ENCODE measurements at regions of chr1 and their contacts with region 1.

Region 1: GRCh38 chr1:200154069-200154767 is 126.7 kb downstream of the NR5A2 start:
- DNase-seq: peak; percentile 94
- H3K4me3 ChIP-seq: no peak overlapping the region
- H3K27ac ChIP-seq: no peak overlapping the region
- H3K4me1 ChIP-seq: peaks cover 12% of the 10 kb centered on the region
- H3K27me3 ChIP-seq: no peaks in the 10 kb centered on the region
- CTCF ChIP-seq: no peak
- POLR2A ChIP-seq: no peak

Region 2: DNA sequence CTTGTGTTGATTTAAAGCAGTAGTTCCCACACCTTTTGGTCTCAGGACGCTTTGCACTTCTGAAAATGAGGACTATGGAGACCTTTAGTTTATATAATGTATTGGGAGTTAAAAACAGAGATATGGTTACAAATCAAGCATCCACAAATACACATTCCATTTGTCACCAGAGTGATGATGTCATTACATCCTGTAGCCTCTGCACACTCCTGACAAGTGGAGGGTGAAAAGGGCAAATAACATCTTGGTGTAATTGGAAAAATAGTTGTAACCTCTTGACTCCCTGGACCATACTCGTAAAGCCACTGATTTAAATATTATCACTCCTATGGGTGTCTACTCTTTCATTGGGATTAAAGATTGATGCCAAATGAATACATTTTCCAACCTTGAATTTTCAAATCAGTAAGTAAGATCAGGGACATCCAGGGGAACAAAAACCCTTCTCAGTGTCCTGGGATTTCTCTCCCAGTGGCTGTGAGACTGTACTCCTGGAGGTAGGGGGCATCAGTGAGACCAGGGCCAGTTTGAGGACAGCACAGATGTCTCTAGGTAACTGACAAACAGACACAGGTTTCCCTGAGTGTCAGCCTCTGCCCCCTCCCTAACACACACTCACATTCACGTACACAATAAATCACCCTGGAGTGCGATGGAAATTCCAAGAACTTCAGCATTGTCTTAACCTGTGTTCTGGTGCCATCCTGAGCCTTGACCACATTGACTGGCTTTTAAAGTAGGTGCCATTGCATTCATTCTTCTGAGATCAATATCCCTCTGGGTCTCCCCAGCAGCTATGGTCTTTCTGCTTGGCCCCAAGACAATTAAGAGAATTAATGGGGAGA is 63.7 kb before region 1 on chr1:
- CTCF ChIA-PET with region 1: no interaction called
- POLR2A ChIA-PET with region 1: no interaction called
- dilution Hi-C with region 1: no loop called
- intact Hi-C with region 1: no loop called
- DNase-seq: peak; percentile 83
- H3K4me3 ChIP-seq: no peak overlapping the region
- H3K27ac ChIP-seq: no peak overlapping the region
- H3K4me1 ChIP-seq: peaks cover 10% of the 10 kb centered on the region
- H3K27me3 ChIP-seq: no peaks in the 10 kb centered on the region
- CTCF ChIP-seq: peak in 1 of 2 donors; percentile 29
- POLR2A ChIP-seq: no peak

Region 3: GRCh38 chr1:200128944-200129885 is 25.0 kb before region 1 on chr1:
- CTCF ChIA-PET with region 1: no interaction called
- POLR2A ChIA-PET with region 1: no interaction called
- dilution Hi-C with region 1: no loop called
- intact Hi-C with region 1: no loop called
- DNase-seq: no peak
- H3K4me3 ChIP-seq: no peak overlapping the region
- H3K27ac ChIP-seq: no peak overlapping the region
- H3K4me1 ChIP-seq: no peaks in the 10 kb centered on the region
- H3K27me3 ChIP-seq: no peaks in the 10 kb centered on the region
- CTCF ChIP-seq: no peak
- POLR2A ChIP-seq: no peak

Region 4: DNA sequence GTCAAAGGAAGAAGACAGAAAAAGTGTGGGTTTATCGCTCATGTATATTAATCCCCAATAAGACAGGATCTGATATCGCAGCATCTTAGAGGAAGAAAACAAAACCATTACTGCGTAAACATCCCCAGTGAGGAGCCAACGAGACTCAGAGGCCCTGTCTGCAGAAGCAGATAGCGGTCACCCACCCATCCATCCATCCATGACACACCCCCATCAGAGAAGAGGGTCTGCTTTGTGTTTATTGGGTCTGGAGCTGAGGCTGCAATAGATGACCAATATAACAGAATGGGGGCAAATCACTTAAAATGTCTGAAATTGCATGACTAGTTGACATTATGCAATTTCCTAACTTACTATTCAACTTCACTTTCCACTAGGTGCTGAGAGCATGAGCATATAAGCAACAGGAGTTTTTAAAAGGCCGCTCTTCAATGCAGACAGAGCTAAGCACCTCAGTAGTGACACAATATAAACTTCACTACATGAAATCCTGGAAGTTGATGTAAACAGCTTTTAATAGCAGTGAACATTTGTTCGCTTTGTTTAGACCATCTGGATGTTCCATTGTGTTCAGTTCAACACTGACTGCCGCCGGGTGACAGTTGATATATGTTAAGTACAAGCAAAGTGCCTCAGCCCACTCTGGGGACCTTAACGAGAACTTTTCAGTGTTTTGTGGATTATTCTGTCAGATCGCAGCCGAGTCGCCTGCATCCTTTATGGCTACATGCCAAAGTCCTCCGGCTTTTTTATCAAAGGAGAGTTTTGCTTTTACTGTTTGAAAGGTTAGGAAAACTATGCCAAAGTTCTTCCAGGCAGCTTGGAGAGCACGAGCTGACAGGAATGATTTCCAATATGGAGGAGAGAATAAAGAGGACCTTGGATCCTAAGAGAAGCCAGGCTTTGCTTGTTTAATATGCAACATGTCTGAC is 88.2 kb after region 1 on chr1:
- CTCF ChIA-PET with region 1: no interaction called
- POLR2A ChIA-PET with region 1: no interaction called
- dilution Hi-C with region 1: no loop called
- intact Hi-C with region 1: loop called (anchors 5 kb)
- DNase-seq: peak; percentile 78
- H3K4me3 ChIP-seq: peak overlapping the region in 1 of 3 experiments; percentile 26
- H3K27ac ChIP-seq: peak overlapping the region; percentile 40
- H3K4me1 ChIP-seq: peaks cover 22% of the 10 kb centered on the region
- H3K27me3 ChIP-seq: peaks cover 0 to 4% of the 10 kb centered on the region in 2 experiments
- CTCF ChIP-seq: no peak
- POLR2A ChIP-seq: no peak

Measured in endothelial cell of umbilical vein (primary cell).